Mammary epithelial cell (primary cell): ENCODE measurements at regions of chr18 and their contacts with region 1.

Region 1: GRCh38 chr18:49139766-49140165 is 189.0 kb upstream of the SMAD7 start:
- DNase-seq: no peak
- H3K4me3 ChIP-seq: no peak overlapping the region
- H3K27ac ChIP-seq: no peak overlapping the region
- H3K4me1 ChIP-seq: no peaks in the 10 kb centered on the region
- H3K27me3 ChIP-seq: no peaks in the 10 kb centered on the region
- CTCF ChIP-seq: no peak

Region 2: DNA sequence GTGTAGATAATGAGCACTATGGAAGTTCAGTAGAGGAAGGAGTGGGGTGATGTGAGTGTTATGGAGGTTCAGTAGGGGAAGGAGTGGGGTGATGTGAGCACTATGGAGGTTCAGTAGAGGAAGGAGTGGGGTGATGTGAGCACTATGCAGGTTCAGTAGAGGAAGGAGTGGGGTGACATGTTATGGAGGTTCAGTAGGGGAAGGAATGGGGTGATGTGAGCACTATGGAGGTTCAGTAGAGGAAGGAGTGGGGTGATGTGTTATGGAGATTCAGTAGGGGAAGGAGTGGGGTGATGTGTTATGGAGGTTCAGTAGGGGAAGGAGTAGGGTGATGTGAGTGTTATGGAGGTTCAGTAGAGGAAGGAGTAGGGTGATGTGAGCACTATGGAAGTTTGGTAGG is 72.7 kb before region 1 on chr18:
- CTCF ChIA-PET with region 1: no interaction called
- dilution Hi-C with region 1: loop called (anchors 5 kb)
- in situ Hi-C with region 1: no loop called
- intact Hi-C with region 1: no loop called
- DNase-seq: no peak
- H3K4me3 ChIP-seq: no peak overlapping the region
- H3K27ac ChIP-seq: no peak overlapping the region
- H3K4me1 ChIP-seq: no peaks in the 10 kb centered on the region
- H3K27me3 ChIP-seq: no peaks in the 10 kb centered on the region
- CTCF ChIP-seq: no peak

Region 3: DNA sequence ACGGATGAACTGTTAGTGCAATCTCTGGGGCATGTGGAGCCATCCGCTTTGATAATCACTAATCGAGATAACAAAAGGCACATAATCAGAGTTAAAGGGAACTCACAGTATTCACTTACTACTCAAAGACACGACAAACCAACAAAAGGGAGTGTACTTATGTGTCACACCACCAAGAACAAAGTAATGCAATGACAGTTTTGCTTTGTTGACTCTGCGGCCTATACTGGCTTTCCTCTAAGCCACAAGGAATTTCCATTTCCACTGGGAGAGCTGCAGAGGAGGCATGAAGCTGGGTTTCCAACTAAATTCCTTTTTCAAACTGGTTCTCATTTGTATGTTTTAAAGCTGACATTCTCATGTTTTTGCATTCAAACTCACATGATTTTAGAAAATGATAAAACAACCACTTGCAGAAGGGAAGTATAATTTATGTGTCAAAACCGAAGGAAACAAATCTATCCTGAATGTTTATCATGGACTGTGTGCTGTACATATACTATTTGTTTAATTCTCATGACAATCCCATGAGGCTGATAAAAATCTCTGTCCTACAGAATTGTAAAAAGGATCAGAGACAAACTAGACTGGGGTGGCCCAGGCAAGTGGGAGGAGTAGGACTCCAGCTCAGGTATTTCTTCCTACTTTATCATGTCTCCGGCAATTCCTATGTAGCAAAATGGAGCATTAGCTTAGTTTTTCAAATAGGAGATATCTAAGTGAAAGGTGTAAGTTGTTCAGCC is 39.4 kb before region 1 on chr18:
- CTCF ChIA-PET with region 1: no interaction called
- dilution Hi-C with region 1: no loop called
- in situ Hi-C with region 1: no loop called
- intact Hi-C with region 1: no loop called
- DNase-seq: no peak
- H3K4me3 ChIP-seq: no peak overlapping the region
- H3K27ac ChIP-seq: no peak overlapping the region
- H3K4me1 ChIP-seq: peaks cover 4% of the 10 kb centered on the region
- H3K27me3 ChIP-seq: no peaks in the 10 kb centered on the region
- CTCF ChIP-seq: no peak